Activated naive CD8-positive, alpha-beta T cell treated with anti-CD3 and anti-CD28 coated beads, Interleukin-2, amount 10 ng/mL, durations not matched to agents 7 days and 5 days (primary cell): ENCODE measurements at regions of chr14 and their contacts with region 1.

Region 1: DNA sequence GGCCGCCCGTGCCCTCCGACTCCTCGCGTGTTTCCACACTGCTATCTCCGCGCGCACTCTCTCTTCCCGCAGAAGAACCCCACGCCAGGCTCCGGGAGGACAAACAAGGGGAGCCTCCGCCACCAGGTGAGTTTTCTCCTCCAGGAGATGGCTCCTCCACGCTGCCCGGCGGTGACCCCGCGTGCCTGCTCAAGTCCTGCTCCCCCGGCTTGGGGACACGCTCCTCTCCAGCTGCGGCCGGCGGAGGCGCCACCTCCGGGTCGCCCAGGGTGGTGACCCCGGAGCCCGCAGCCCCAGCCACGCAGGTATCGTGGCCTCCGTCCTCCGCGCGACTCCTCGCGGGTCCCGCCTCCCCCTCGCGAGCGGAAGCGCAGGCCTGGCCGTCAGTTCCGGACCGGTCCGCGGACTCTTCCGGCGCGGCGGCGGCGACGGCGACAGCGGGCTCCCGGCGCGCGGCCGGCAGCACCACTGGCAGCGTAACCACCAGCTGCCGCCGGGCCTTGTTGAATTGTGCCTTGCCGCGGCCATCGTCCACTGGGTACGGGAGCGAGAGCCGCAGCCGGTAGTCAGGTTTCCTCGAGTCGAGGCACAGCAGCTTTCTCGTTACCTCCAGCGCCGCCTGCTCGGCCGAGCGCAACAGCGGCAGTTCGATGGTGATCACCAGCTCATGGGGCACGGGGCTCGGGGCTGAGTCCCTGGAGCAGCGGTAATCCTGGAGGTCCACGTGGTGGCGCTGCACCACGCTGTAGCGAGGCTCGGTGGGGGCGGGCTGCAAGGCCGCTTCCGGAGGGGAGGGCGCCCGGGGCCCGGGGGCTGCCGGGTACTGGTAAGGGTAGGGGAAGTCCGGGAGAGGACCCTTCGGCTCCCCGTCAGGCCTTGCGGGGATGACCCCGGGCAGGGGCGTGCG is 1.2 kb downstream of the DNAAF2 start:
- DNase-seq: peak; percentile 94
- ATAC-seq: peak; percentile 85
- H3K4me3 Mint-ChIP-seq: peak overlapping the region; percentile 99
- H3K27ac Mint-ChIP-seq: peak overlapping the region; percentile 90
- H3K4me1 Mint-ChIP-seq: peaks cover 32% of the 10 kb centered on the region
- H3K27me3 Mint-ChIP-seq: no peaks in the 10 kb centered on the region

Region 2: DNA sequence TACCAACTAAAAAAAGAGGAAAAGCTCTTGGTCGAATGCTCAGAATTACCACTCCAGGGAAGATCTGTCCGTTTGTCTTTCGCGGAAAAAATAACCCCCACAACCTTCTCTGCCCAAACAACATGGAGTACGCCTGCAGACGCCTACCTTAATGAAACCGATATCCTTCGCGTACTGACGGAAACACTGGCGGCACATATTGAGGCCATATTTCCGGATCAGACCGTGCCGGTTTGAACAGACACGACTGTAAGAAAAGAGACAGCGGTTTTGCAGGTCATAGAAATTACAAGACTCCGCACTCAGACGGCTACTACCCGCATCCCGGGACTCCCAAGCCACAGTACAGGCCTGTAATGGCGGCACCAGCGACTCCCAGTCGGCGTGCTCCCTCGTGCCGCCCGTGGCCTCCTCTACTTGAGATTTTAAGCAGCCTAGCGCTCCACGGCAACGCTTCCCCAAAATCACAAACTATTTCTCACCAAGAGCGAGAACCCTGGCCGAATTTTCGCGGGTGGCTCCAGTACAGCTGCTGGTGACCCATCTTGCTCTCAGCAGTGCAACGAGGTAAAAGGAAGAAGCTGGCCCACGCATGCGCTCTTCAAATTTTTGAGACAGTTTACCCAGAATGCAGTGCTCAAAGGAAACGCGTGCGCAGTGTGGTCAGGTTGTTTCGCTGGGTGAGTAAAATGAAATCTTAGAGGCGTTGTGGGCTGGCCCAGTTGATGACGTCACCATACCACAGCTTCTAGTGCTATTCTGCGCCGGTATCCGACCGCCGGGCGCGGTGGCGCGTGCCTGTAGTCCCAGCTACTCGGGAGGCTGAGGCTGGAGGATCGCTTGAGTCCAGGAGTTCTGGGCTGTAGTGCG is 47.9 kb before region 1 on chr14 and contains the start of gene RPS29:
- POLR2A ChIA-PET with region 1: interaction called, 13 read pairs
- DNase-seq: peak; percentile 98
- ATAC-seq: peak; percentile 89
- H3K4me3 Mint-ChIP-seq: peak within 1 kb of the TSS; percentile 94
- H3K27ac Mint-ChIP-seq: peak within 1 kb of the TSS; percentile 99
- H3K4me1 Mint-ChIP-seq: peaks cover 42% of the 10 kb centered on the region
- H3K27me3 Mint-ChIP-seq: no peaks in the 10 kb centered on the region
- total RNA-seq, gene RPS29: 1,762 to 1,786 TPM

Region 3: GRCh38 chr14:49598485-49599300 is 35.2 kb before region 1 on chr14 and contains the start of gene LRR1:
- POLR2A ChIA-PET with region 1: interaction called, 17 read pairs
- DNase-seq: peak; percentile 94
- ATAC-seq: peak; percentile 83
- H3K4me3 Mint-ChIP-seq: peak within 1 kb of the TSS; percentile 95
- H3K27ac Mint-ChIP-seq: peak within 1 kb of the TSS; percentile 97
- H3K4me1 Mint-ChIP-seq: peaks cover 28% of the 10 kb centered on the region
- H3K27me3 Mint-ChIP-seq: peaks cover 2% of the 10 kb centered on the region
- total RNA-seq, gene LRR1: 43.7 to 44.3 TPM

Region 4: GRCh38 chr14:49852301-49853157 is 218.6 kb after region 1 on chr14 and contains the start of gene NEMF:
- POLR2A ChIA-PET with region 1: interaction called, 32 read pairs
- DNase-seq: peak; percentile 81
- ATAC-seq: peak; percentile 80
- H3K4me3 Mint-ChIP-seq: peak within 1 kb of the TSS; percentile 99
- H3K27ac Mint-ChIP-seq: peak within 1 kb of the TSS; percentile 99
- H3K4me1 Mint-ChIP-seq: peaks cover 29% of the 10 kb centered on the region
- H3K27me3 Mint-ChIP-seq: no peaks in the 10 kb centered on the region
- total RNA-seq, gene NEMF: 90.1 to 91.1 TPM